Naive thymus-derived CD4-positive, alpha-beta T cell (primary cell): ENCODE measurements at regions of chr1 and their contacts with region 1.

Region 1: GRCh38 chr1:175023043-175023921 is at the start of gene MRPS14:
- DNase-seq: peak; percentile 93 to 98 (median 97)
- ATAC-seq: peak; percentile 97
- H3K4me3 ChIP-seq: peak within 1 kb of the TSS; percentile 86
- H3K4me3 Mint-ChIP-seq: peak within 1 kb of the TSS; percentile 86 to 97 (median 92)
- H3K27ac ChIP-seq: peak within 1 kb of the TSS; percentile 92
- H3K27ac Mint-ChIP-seq: peak within 1 kb of the TSS; percentile 84 to 98 (median 90)
- H3K4me1 ChIP-seq: peaks cover 6 to 12% of the 10 kb centered on the region in 2 donors
- H3K4me1 Mint-ChIP-seq: peaks cover 23 to 47% (median 36%) of the 10 kb centered on the region in 7 donors
- H3K27me3 ChIP-seq: no peaks in the 10 kb centered on the region
- H3K27me3 Mint-ChIP-seq: no peaks in the 10 kb centered on the region
- total RNA-seq, gene MRPS14: 12.4 to 36.5 (median 31.5) TPM

Region 2: GRCh38 chr1:173714759-173715537 is 1308.3 kb before region 1 on chr1 and contains the start of gene KLHL20:
- CTCF ChIA-PET with region 1: no interaction called
- POLR2A ChIA-PET with region 1: no interaction called
- intact Hi-C with region 1: loop called (anchors 1 to 10 kb)
- DNase-seq: peak; percentile 60 to 92 (median 89)
- ATAC-seq: peak; percentile 98
- H3K4me3 ChIP-seq: peak within 1 kb of the TSS; percentile 77
- H3K4me3 Mint-ChIP-seq: peak within 1 kb of the TSS; percentile 90 to 100 (median 96)
- H3K27ac ChIP-seq: peak within 1 kb of the TSS; percentile 78
- H3K27ac Mint-ChIP-seq: peak within 1 kb of the TSS; percentile 89 to 99 (median 94)
- H3K4me1 ChIP-seq: peaks cover 11 to 18% of the 10 kb centered on the region in 2 donors
- H3K4me1 Mint-ChIP-seq: peaks cover 14 to 48% (median 35%) of the 10 kb centered on the region in 7 donors
- H3K27me3 ChIP-seq: no peaks in the 10 kb centered on the region
- H3K27me3 Mint-ChIP-seq: peaks cover 14 to 32% (median 19%) of the 10 kb centered on the region in 5 donors
- total RNA-seq, gene KLHL20: 28.3 to 40.9 (median 32.8) TPM

Region 3: GRCh38 chr1:174022080-174022975 is 1001.0 kb before region 1 on chr1 and contains the start of gene RC3H1:
- CTCF ChIA-PET with region 1: no interaction called
- POLR2A ChIA-PET with region 1: no interaction called
- intact Hi-C with region 1: loop called (anchors 2 to 5 kb)
- DNase-seq: peak; percentile 75 to 89 (median 83)
- ATAC-seq: peak; percentile 97
- H3K4me3 ChIP-seq: peak within 1 kb of the TSS; percentile 86
- H3K4me3 Mint-ChIP-seq: peak within 1 kb of the TSS; percentile 85 to 100 (median 98)
- H3K27ac ChIP-seq: peak within 1 kb of the TSS; percentile 94
- H3K27ac Mint-ChIP-seq: peak within 1 kb of the TSS; percentile 90 to 99 (median 98)
- H3K4me1 ChIP-seq: peaks cover 24 to 32% of the 10 kb centered on the region in 2 donors
- H3K4me1 Mint-ChIP-seq: peaks cover 19 to 52% (median 49%) of the 10 kb centered on the region in 7 donors
- H3K27me3 ChIP-seq: no peaks in the 10 kb centered on the region
- H3K27me3 Mint-ChIP-seq: peaks cover 0 to 5% (median 0%) of the 10 kb centered on the region in 5 donors
- total RNA-seq, gene RC3H1: 36.5 to 49.5 (median 47.7) TPM

Region 4: DNA sequence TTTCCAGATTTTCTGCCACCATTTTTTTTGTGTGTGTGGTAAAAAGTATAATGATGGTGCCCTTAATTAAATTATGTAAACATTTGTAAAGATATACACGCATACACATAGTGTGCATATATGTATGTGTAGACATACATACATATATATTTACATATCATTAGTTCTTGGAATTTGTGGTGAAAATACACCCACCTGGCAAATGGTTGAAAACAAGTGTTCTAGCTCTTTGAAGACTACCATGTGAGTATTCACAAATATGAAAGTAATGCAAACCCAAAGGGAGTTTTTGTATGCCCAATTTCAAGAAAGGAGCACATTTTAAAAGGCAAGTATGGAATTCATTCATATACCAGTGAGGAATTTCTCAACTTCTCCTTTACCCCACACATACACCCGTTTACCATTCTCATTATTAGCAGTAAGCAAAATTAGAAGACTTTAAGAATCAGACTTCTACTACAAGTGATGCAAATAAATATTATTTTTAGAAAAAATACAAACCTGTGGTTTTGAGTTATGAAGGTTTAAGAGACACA is 855.9 kb before region 1 on chr1:
- CTCF ChIA-PET with region 1: no interaction called
- POLR2A ChIA-PET with region 1: no interaction called
- intact Hi-C with region 1: no loop called
- DNase-seq: no peak
- ATAC-seq: no peak
- H3K4me3 ChIP-seq: no peak overlapping the region
- H3K4me3 Mint-ChIP-seq: no peak overlapping the region
- H3K27ac ChIP-seq: no peak overlapping the region
- H3K27ac Mint-ChIP-seq: no peak overlapping the region
- H3K4me1 ChIP-seq: peaks cover 5 to 24% of the 10 kb centered on the region in 2 donors
- H3K4me1 Mint-ChIP-seq: peaks cover 31 to 69% (median 56%) of the 10 kb centered on the region in 7 donors
- H3K27me3 ChIP-seq: no peaks in the 10 kb centered on the region
- H3K27me3 Mint-ChIP-seq: no peaks in the 10 kb centered on the region

Region 5: DNA sequence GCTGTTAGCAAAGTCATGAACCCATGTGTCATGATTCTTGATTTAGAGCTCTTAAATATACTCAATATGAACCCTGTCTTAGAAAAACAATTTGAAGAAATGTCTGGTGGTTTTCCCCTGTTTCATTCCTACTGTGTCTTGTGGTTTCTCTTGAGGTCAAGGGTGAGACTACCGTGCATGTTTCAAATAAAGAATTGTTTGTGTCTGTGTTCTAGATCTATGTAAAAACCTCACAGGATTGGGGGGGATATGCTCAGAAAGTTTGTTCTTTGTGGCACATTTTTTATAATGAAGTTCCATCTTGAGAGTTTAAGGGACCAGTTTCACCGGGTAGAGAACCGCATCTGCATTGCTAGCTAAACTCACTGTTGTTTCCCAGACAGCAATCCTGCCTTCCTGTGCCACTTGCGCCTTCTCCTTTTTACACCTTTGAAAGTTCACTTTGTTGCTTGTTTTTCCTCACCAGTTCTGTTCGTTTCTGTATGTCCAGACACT is 54.5 kb before region 1 on chr1:
- CTCF ChIA-PET with region 1: no interaction called
- POLR2A ChIA-PET with region 1: interaction called, 35 read pairs
- intact Hi-C with region 1: loop called (anchors 1 to 2 kb)
- DNase-seq: peak in 7 of 9 donors; percentile 74 to 90 (median 85)
- ATAC-seq: peak; percentile 75
- H3K4me3 ChIP-seq: peak overlapping the region; percentile 18
- H3K4me3 Mint-ChIP-seq: peak overlapping the region; percentile 56 to 86 (median 74)
- H3K27ac ChIP-seq: peak overlapping the region; percentile 71
- H3K27ac Mint-ChIP-seq: peak overlapping the region; percentile 87 to 97 (median 92)
- H3K4me1 ChIP-seq: peaks cover 69 to 76% of the 10 kb centered on the region in 2 donors
- H3K4me1 Mint-ChIP-seq: peaks cover 43 to 87% (median 74%) of the 10 kb centered on the region in 7 donors
- H3K27me3 ChIP-seq: no peaks in the 10 kb centered on the region
- H3K27me3 Mint-ChIP-seq: no peaks in the 10 kb centered on the region

Region 6: GRCh38 chr1:175099916-175100315 is 76.6 kb after region 1 on chr1:
- CTCF ChIA-PET with region 1: no interaction called
- POLR2A ChIA-PET with region 1: no interaction called
- intact Hi-C with region 1: no loop called
- DNase-seq: no peak
- ATAC-seq: no peak
- H3K4me3 ChIP-seq: no peak overlapping the region
- H3K4me3 Mint-ChIP-seq: no peak overlapping the region
- H3K27ac ChIP-seq: no peak overlapping the region
- H3K27ac Mint-ChIP-seq: no peak overlapping the region
- H3K4me1 ChIP-seq: no peaks in the 10 kb centered on the region
- H3K4me1 Mint-ChIP-seq: peaks cover 0 to 2% (median 0%) of the 10 kb centered on the region in 7 donors
- H3K27me3 ChIP-seq: no peaks in the 10 kb centered on the region
- H3K27me3 Mint-ChIP-seq: peaks cover 0 to 3% (median 0%) of the 10 kb centered on the region in 5 donors

Region 7: DNA sequence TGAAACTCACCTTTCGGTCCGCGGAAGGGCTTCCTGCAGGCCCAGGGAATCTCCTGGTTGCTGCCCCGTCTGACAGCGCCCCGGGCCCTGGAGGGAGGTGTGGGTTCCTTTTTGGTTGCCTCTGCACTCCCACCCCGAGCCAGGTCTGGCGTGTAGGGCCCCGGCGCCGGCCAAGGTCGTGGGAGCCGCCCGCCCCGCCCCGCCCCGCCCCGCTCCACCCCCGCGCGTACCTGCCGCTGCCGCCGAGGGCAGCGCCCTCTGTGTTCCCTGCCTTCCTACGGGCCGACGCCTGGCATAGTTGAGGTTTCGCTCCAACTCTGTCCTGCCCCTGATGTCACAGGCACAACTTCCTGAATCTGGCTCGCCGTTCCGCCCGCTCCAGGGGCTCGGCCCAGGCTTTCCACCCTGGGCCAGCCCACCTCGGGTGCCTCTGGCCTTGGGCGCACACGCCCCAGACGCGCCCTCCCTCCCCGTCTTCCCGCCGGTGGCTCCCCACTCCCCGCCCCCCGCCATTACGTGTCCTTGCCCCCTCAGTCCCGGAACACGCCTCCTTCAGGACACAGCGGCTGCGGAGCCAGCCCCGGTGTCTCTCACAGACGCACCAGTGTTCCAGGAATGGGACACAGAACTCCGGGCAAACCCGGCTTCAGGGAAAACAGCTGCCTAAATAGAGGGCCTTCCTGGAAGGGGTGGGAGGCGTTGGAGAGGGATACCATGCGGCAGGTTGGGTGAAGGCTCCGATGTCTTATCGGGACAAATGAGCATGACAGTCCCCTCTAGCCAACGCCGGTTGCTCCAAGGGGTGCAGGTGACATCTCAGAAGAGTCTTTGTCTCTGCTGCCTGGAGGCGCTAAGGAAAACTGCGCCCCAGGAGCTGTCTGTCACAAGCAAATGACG is 169.6 kb after region 1 on chr1 and contains the start of gene KIAA0040:
- CTCF ChIA-PET with region 1: interaction called, 3 read pairs
- POLR2A ChIA-PET with region 1: interaction called, 4 read pairs
- intact Hi-C with region 1: loop called (anchors 1 to 2 kb)
- DNase-seq: peak; percentile 25 to 66 (median 40)
- ATAC-seq: peak; percentile 78
- H3K4me3 ChIP-seq: peak within 1 kb of the TSS; percentile 90
- H3K4me3 Mint-ChIP-seq: peak within 1 kb of the TSS; percentile 89 to 100 (median 97)
- H3K27ac ChIP-seq: peak within 1 kb of the TSS; percentile 80
- H3K27ac Mint-ChIP-seq: peak within 1 kb of the TSS; percentile 73 to 97 (median 92)
- H3K4me1 ChIP-seq: peaks cover 38 to 43% of the 10 kb centered on the region in 2 donors
- H3K4me1 Mint-ChIP-seq: peaks cover 40 to 67% (median 53%) of the 10 kb centered on the region in 7 donors
- H3K27me3 ChIP-seq: no peaks in the 10 kb centered on the region
- H3K27me3 Mint-ChIP-seq: no peaks in the 10 kb centered on the region
- total RNA-seq, gene KIAA0040: 21.7 to 88.1 (median 27.0) TPM

Region 8: DNA sequence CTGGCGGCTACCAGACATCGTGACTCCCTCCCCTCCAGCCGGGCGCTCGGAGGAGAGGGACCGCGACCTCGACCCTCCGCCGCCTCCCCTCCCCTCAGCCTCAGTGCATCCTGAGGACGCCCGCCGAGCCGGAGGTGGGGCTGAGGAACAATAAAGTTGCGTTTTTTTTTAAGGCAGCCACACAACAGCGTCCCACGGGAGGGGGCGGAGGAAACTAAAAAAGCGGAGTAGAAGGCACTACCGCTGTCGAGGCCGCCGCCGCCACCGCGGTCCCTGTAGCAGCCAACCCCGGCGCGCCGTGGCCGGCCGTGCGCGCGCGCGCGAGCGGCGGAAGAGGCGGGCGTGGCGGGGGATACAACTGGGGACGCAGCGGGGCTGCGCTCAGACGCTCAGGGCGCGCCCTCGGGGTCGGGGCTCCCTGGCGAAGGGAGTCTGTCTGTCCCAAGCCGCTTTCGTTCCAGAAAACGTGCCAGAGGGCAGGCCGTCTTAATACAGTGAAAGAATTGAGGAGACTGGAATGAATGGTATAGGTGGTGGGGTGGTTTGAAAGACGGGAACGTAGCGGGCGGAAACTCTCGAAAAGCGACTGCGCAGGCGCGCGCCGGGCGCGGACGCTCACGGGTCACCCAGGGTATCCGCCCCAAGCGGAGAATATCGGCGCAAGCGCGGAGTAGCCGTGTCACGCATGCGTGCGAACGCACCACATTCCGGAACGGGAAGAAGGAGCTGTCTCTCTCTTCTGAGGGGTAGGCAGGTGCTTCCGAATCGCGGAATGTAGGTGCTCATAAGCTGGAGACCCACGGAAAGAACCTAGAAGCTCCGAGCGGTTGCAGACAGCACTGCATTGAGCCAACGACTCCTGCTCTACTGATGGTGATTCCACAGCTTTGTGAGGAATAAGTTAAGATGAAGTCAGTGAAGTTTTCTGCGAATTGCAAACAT is 1184.0 kb after region 1 on chr1 and contains the start of gene COP1:
- CTCF ChIA-PET with region 1: no interaction called
- POLR2A ChIA-PET with region 1: interaction called, 3 read pairs
- intact Hi-C with region 1: loop called (anchors 1 to 5 kb)
- DNase-seq: peak; percentile 89 to 97 (median 96)
- ATAC-seq: peak; percentile 91
- H3K4me3 ChIP-seq: peak within 1 kb of the TSS; percentile 90
- H3K4me3 Mint-ChIP-seq: peak within 1 kb of the TSS; percentile 81 to 100 (median 98)
- H3K27ac ChIP-seq: peak within 1 kb of the TSS; percentile 81
- H3K27ac Mint-ChIP-seq: peak within 1 kb of the TSS; percentile 93 to 100 (median 97)
- H3K4me1 ChIP-seq: peaks cover 10 to 24% of the 10 kb centered on the region in 2 donors
- H3K4me1 Mint-ChIP-seq: peaks cover 20 to 56% (median 47%) of the 10 kb centered on the region in 7 donors
- H3K27me3 ChIP-seq: no peaks in the 10 kb centered on the region
- H3K27me3 Mint-ChIP-seq: peaks cover 0 to 3% (median 0%) of the 10 kb centered on the region in 5 donors
- total RNA-seq, gene COP1: 39.1 to 57.0 (median 43.9) TPM